ENCODE measurements at regions of chr14 and their contacts with region 1.

Region 1: DNA sequence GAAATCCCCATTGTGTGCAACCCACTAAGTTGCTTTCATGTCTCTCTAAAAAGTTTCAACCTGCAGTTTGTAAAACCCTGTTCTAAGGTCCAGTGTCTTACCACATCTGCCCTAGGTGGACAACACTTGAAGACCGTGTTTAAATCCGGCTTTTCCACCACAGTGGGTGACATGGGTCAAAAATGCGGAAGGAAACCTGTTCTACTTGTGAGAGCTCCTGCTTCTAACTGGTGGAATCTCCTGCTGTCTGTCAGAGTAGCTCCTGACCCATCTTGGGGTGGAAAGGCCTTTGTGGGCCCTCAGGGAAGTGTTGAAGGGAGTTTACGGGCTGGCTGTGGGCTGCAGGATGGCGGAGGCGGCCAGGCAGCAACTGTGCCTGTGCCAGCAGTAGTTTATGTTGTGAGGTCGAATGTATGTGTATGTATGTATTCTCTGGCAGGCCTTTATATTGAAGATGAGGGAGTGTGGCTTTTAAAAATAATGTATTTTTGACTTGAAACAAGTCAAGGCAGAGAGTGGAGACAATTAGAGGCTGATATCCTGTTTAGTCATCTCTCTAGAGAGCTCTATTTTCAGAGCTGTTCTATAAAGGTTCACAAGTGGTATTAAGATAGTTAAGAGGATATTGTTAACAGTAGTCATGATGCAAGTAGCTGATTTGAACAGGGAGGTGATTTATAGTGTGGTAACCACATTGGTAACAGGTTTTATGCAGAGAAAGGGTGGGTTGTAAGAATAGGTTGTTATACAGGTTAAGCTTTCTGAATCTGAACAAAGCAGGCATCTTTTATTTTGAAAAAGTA is 67.0 kb downstream of the PRKCH start:
- DNase-seq: peak; percentile 73 to 98
- H3K4me3 ChIP-seq: peak overlapping the region; percentile 36; the same call in 1 of the 2 replicates
- H3K27ac ChIP-seq: peak overlapping the region; percentile 97
- H3K4me1 ChIP-seq: peaks cover 69% of the 10 kb centered on the region
- H3K27me3 ChIP-seq: no peaks in the 10 kb centered on the region
- CTCF ChIP-seq: no peak

Region 2: GRCh38 chr14:61456720-61457119 is 68.3 kb after region 1 on chr14:
- CTCF ChIA-PET with region 1: no interaction called
- POLR2A ChIA-PET with region 1: no interaction called
- intact Hi-C with region 1: loop called (anchors 1 kb)
- DNase-seq: peak; percentile 65 to 72
- H3K4me3 ChIP-seq: no peak overlapping the region
- H3K27ac ChIP-seq: no peak overlapping the region
- H3K4me1 ChIP-seq: peaks cover 13% of the 10 kb centered on the region
- H3K27me3 ChIP-seq: no peaks in the 10 kb centered on the region
- CTCF ChIP-seq: peak; percentile 94

Measured in PC-9 (cell line).